ENCODE measurements at regions of chr2 and their contacts with region 1.

Region 1: GRCh38 chr2:130332271-130333073 is 10.2 kb upstream of the IMP4 start:
- DNase-seq: peak; percentile 83
- CTCF ChIP-seq: peak; percentile 92

Region 2: DNA sequence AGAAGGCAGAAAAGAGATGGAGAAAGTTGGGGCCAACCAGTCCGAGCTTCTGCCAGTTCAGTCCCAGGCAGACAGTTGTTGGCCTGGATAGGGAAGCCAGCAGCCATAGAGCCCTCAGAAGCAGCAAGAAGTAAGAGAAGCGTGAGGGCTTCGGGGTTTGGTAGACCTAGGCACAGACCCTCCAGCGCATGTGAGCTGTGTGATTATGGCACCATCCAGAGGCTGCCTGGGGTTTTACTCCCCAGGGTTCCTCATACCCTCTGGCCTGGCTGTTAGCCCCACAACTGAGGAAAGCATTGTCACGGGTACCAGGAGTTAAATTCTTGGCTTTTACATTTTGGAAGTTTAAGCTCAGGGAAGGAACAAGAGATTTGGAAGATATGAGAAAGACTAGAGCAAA is 446.7 kb before region 1 on chr2:
- CTCF ChIA-PET with region 1: no interaction called
- POLR2A ChIA-PET with region 1: no interaction called
- DNase-seq: no peak
- CTCF ChIP-seq: no peak

Region 3: GRCh38 chr2:130316596-130316995 is 15.9 kb before region 1 on chr2:
- CTCF ChIA-PET with region 1: interaction called, 36 read pairs
- POLR2A ChIA-PET with region 1: no interaction called
- DNase-seq: no peak
- CTCF ChIP-seq: no peak